Activated CD4-positive, alpha-beta T cell treated with anti-CD3 and anti-CD28 coated beads, Interleukin-2, amount 10 ng/mL, durations not matched to agents 24 days and 14 days (primary cell): ENCODE measurements at regions of chr5 and their contacts with region 1.

Region 1: GRCh38 chr5:132456296-132457001 is 34.1 kb downstream of the IRF1 start:
- DNase-seq: peak; percentile 90
- H3K4me3 Mint-ChIP-seq: peak overlapping the region; percentile 74
- H3K27ac Mint-ChIP-seq: peak overlapping the region; percentile 99
- H3K4me1 Mint-ChIP-seq: peaks cover 84% of the 10 kb centered on the region
- H3K27me3 Mint-ChIP-seq: no peaks in the 10 kb centered on the region

Region 2: DNA sequence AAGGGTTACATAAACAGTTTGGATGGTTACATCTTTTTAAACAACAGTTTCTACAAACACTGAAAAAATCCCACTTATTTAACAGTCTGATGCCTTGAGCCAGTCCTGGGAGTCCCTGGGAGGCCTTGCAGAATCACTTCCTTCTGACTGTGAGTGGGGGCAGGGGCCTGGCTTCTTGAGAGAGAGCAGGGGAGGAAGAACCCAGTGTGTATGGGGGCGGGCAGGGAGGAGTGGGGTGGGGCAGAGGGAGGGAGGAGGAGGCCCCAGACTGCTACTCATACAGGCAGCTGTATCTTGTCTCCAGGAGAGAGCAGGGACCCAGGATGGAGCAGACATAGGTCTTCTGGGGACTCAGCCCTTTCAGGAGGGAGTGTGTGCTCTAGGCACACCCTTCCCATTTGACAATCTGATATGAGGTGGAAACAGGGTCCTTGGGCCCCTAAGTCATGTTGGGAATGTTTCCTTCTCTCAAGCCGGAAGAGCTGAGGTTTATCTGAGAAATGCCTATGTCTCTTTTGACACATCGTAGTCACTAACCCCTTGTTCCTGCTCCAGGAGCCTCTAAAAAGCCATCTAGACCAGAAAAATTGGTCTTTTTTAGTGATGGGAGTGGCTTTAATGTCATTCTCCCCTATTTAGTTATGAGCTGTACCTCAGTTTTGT is 18.7 kb before region 1 on chr5:
- intact Hi-C with region 1: loop called (anchors 1 kb)
- DNase-seq: peak; percentile 87
- H3K4me3 Mint-ChIP-seq: peak overlapping the region; percentile 61
- H3K27ac Mint-ChIP-seq: peak overlapping the region; percentile 86
- H3K4me1 Mint-ChIP-seq: peaks cover 71% of the 10 kb centered on the region
- H3K27me3 Mint-ChIP-seq: no peaks in the 10 kb centered on the region

Region 3: DNA sequence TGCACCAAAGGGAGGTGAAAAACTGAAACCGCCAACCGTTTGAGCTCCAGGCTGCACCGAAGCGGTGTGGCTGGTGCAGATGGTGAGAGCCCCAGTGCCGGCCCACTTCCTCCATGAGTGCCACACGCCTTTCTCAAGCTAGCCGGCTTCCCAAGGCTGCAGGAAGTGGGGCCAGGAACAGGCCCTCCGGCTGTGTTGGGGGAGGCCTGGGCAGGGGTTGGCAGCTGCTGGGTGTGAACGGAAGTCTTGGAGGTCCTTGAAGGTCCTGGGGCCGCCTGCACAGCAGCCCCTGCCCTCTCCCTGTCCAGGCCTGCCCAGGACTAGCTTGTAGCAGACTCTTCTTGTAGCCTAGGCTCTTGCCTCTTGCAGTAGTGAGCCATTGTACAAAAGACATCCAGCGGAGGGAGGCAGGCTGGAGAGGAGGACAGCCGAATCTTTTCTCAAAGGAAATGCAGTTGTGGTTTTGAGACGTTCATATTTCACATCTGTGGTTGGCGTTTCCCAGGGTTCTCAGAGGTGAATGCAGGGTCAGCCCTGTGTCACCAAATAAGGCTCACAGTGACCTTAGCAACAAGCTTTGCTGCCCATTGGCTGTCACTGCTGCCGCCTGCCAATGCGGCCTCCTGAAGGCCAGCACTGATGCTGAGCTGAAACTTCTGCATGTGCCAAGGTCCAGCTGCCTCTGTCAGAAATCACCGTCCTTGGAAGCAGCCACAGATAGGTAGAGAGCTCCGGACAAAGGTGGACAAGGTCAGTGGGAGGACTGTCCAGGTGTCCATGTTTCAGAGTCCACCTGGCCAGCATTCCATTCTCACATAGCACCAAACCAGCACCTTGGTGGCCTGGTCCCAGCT is 10.2 kb after region 1 on chr5:
- intact Hi-C with region 1: loop called (anchors 1 kb)
- DNase-seq: peak; percentile 93
- H3K4me3 Mint-ChIP-seq: peak overlapping the region; percentile 64
- H3K27ac Mint-ChIP-seq: peak overlapping the region; percentile 80
- H3K4me1 Mint-ChIP-seq: peaks cover 81% of the 10 kb centered on the region
- H3K27me3 Mint-ChIP-seq: no peaks in the 10 kb centered on the region

Region 4: GRCh38 chr5:132473019-132473531 is 16.6 kb after region 1 on chr5:
- intact Hi-C with region 1: loop called (anchors 2 kb)
- DNase-seq: peak; percentile 95
- H3K4me3 Mint-ChIP-seq: peak overlapping the region; percentile 64
- H3K27ac Mint-ChIP-seq: peak overlapping the region; percentile 91
- H3K4me1 Mint-ChIP-seq: peaks cover 63% of the 10 kb centered on the region
- H3K27me3 Mint-ChIP-seq: no peaks in the 10 kb centered on the region